ENCODE measurements at regions of chr14 and their contacts with region 1.

Region 1: GRCh38 chr14:23929822-23930294 is 23.7 kb upstream of the DHRS4 start:
- DNase-seq: peak; percentile 81
- H3K4me3 ChIP-seq: no peak overlapping the region
- H3K27ac ChIP-seq: no peak overlapping the region
- H3K4me1 ChIP-seq: no peaks in the 10 kb centered on the region
- CTCF ChIP-seq: peak; percentile 95

Region 2: GRCh38 chr14:23588884-23589598 is 340.8 kb before region 1 on chr14:
- CTCF ChIA-PET with region 1: no interaction called
- POLR2A ChIA-PET with region 1: no interaction called
- intact Hi-C with region 1: loop called (anchors 2 kb)
- DNase-seq: peak; percentile 69
- H3K4me3 ChIP-seq: no peak overlapping the region
- H3K27ac ChIP-seq: no peak overlapping the region
- H3K4me1 ChIP-seq: no peaks in the 10 kb centered on the region
- CTCF ChIP-seq: peak; percentile 84

Region 3: DNA sequence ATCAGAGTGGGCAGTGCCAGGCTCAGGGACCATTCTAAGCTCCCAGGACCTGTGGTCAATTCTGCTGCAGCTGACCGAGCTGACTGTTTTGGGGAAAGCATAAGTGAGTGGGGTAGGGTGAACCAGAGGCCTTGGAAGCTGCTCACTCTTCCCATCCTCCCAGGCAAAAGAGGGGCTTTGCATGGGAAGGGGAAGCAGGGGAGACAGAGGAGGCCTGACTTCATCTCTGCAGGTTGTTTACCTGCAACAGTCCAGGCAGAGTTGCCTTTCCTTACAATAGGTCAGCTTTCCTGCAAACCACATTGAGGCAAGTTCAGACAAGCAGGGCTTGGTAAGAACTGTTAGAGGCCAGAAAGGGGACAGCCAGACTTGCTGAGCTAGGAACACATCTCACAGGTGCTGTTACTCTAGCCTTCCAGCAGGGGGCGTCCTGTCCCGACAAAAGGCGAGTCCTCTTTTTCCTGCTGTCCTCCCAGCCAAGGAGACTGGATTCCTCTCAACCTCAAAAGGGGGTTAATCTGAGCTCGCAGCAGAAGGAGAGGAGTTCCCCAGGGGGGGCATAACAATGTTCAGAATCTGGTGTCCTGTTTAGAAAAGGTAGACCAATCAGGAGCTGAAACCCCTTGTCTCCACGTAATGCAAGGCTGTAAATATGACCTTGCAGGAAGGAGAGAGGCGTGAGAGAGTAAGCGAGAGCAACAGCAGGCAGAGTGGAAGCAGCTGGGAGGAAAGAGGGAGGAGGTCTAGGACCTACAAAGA is 298.0 kb before region 1 on chr14:
- CTCF ChIA-PET with region 1: no interaction called
- POLR2A ChIA-PET with region 1: no interaction called
- intact Hi-C with region 1: loop called (anchors 10 kb)
- DNase-seq: peak; percentile 63
- H3K4me3 ChIP-seq: no peak overlapping the region
- H3K27ac ChIP-seq: no peak overlapping the region
- H3K4me1 ChIP-seq: no peaks in the 10 kb centered on the region
- CTCF ChIP-seq: peak; percentile 97

Region 4: GRCh38 chr14:23816371-23816770 is 113.5 kb before region 1 on chr14:
- CTCF ChIA-PET with region 1: no interaction called
- POLR2A ChIA-PET with region 1: no interaction called
- intact Hi-C with region 1: no loop called
- DNase-seq: no peak
- H3K4me3 ChIP-seq: no peak overlapping the region
- H3K27ac ChIP-seq: no peak overlapping the region
- H3K4me1 ChIP-seq: no peaks in the 10 kb centered on the region
- CTCF ChIP-seq: no peak

Region 5: DNA sequence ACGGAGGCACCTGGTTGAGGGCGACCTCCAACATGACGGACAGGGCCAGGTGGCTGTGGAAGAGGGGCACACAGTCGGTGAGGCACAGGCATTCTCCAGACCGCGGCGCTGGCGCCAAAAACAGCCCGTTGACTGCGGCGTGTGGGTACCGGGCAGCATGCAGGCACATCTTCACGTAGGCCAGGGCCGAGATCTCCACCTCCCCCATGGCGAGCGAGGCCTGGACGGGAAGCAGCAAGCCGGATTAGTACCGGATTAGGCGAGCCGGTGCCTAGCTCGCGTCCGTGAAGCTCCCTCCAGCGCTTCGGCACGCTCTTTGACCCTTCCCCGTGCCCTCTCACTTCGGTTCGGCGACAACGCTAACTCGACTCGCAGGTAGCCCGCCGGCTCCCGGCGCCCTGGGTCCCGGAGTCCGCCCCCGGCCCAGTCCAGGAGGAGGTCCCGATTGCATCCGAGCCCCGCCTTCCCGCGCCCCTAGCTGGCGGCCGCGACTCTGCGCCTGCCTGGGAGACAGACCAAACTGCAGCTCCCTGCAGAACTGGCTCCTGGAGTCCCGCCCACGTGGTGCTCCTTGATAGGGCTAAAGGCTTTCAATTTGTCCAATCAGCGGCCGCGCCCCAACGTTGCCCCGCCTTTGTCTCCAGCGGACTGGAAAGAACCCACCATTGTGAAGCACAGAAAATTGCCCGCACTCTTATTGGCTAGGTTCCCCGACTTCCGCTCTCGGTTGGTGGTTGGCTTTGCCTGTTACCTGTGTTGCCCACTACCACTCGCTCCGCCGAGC is 211.4 kb after region 1 on chr14 and contains the start of gene EMC9:
- CTCF ChIA-PET with region 1: no interaction called
- POLR2A ChIA-PET with region 1: no interaction called
- intact Hi-C with region 1: no loop called
- DNase-seq: peak; percentile 100
- H3K4me3 ChIP-seq: peak within 1 kb of the TSS; percentile 85
- H3K27ac ChIP-seq: peak within 1 kb of the TSS; percentile 81
- H3K4me1 ChIP-seq: peaks cover 44% of the 10 kb centered on the region
- CTCF ChIP-seq: peak; percentile 51
- total RNA-seq, gene EMC9: 73.2 and 74.8 TPM in 2 replicates

Measured in OCI-LY7 (cell line).